T-cell (primary cell): ENCODE measurements at regions of chr17 and their contacts with region 1.

Region 1: DNA sequence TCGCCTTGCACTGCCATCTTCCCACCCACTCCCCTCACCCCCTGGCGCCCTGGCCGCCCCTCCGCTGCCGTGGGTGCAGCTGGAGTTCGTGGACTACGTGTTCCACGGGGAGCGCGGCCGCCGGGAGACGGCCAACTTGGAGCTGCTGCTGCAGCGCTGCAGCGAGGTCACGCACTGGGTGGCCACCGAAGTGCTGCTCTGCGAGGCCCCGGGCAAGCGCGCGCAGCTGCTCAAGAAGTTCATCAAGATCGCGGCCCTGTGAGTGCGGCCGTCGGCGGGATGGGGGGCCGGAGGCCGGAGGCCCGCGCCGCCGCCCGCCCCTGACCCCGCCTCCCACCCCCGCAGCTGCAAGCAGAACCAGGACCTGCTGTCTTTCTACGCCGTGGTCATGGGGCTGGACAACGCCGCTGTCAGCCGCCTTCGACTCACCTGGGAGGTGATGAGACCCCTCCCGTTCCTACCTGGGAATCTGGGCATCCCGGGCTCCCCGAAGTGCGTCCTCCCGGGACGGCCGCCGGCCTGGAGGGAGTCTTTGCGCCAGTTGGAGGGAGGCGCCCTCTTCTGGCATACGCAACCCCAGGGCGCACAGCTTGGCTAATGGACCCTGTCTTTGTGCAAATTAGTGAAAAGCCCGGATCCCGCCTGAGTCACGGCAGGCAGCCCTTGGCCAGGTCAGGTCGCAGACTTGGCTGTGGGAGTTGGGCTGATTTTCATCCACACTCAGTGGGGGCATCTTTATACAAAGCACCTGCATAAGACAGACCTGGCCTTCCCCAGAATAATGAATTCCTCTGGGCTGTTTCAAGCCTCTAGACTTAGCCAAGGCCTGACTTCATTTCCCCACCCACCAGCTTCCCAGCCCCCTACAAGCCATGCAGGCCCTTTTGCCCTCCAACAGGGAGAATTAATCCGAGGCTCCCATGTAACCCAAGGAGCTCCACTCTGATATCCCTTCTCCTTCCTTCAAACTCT is 14.3 kb downstream of the RAPGEFL1 start:
- DNase-seq: peak in 34 of 35 experiments; percentile 22 to 77 (median 48)
- ATAC-seq: peak; percentile 85 to 91 (median 88)
- H3K4me3 ChIP-seq: peak overlapping the region; percentile 51 to 64
- H3K4me3 Mint-ChIP-seq: peak overlapping the region; percentile 86 to 95 (median 92)
- H3K27ac ChIP-seq: no peak overlapping the region
- H3K27ac Mint-ChIP-seq: peak overlapping the region in 1 of 2 donors; percentile 49
- H3K4me1 ChIP-seq: peaks cover 0 to 15% of the 10 kb centered on the region in 2 experiments
- H3K4me1 Mint-ChIP-seq: peaks cover 4 to 18% (median 9%) of the 10 kb centered on the region in 3 donors
- H3K27me3 ChIP-seq: peaks cover 0 to 15% of the 10 kb centered on the region in 2 experiments
- H3K27me3 Mint-ChIP-seq: no peaks in the 10 kb centered on the region

Region 2: GRCh38 chr17:39981207-39981741 is 210.2 kb before region 1 on chr17:
- CTCF ChIA-PET with region 1: no interaction called
- POLR2A ChIA-PET with region 1: no interaction called
- DNase-seq: no peak
- ATAC-seq: no peak
- H3K4me3 ChIP-seq: peak overlapping the region; percentile 85 to 96
- H3K4me3 Mint-ChIP-seq: peak overlapping the region; percentile 88 to 93 (median 91)
- H3K27ac ChIP-seq: peak overlapping the region; percentile 94
- H3K27ac Mint-ChIP-seq: peak overlapping the region; percentile 93 to 97
- H3K4me1 ChIP-seq: peaks cover 13 to 20% of the 10 kb centered on the region in 2 experiments
- H3K4me1 Mint-ChIP-seq: peaks cover 39 to 46% (median 44%) of the 10 kb centered on the region in 3 donors
- H3K27me3 ChIP-seq: peaks cover 0 to 7% of the 10 kb centered on the region in 2 experiments
- H3K27me3 Mint-ChIP-seq: no peaks in the 10 kb centered on the region

Region 3: DNA sequence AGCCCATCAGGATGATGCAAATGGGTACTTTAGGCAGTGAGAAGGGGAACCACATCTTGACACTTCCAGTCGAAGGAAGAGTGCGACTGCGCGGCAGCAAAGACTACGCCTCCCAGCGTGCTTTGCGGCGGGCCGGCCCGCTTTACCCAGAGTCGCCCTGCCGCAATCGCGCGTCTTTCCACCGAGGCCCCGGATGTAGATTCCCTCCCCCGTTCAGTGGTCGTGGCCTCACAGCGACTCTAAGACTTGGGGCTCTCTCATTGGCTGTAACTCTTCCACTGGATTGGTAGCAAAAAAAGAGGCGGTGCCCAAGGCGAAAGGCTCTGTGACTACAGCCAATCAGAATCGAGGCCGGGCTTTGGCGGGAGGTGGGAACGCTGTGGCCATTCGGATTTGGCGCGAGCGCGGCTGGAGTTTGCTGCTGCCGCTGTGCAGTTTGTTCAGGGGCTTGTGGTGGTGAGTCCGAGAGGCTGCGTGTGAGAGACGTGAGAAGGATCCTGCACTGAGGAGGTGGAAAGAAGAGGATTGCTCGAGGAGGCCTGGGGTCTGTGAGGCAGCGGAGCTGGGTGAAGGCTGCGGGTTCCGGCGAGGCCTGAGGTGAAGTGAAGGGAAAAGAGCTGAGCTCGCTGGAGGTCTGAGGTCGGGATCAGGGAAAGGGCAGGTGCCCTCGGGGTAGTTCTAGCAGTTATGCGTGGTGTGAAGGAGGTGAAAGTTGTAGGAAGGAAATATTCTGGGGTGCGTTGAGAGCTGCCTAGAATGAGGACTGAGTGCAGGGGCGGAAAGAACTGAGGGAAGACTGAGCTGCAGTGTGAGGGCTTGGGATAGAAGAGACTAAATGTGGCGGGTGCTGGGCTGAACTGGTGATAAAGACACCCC is 96.2 kb after region 1 on chr17 and contains the start of gene CDC6:
- CTCF ChIA-PET with region 1: no interaction called
- POLR2A ChIA-PET with region 1: interaction called in 1 of 2 experiments, 12 read pairs
- DNase-seq: peak; percentile 93 to 100 (median 99)
- ATAC-seq: peak; percentile 94 to 97 (median 96)
- H3K4me3 ChIP-seq: peak within 1 kb of the TSS; percentile 53 to 81
- H3K4me3 Mint-ChIP-seq: peak within 1 kb of the TSS; percentile 94 to 99 (median 97)
- H3K27ac ChIP-seq: peak within 1 kb of the TSS; percentile 6
- H3K27ac Mint-ChIP-seq: peak within 1 kb of the TSS; percentile 81 to 95
- H3K4me1 ChIP-seq: peaks cover 3 to 20% of the 10 kb centered on the region in 2 experiments
- H3K4me1 Mint-ChIP-seq: peaks cover 28 to 38% (median 32%) of the 10 kb centered on the region in 3 donors
- H3K27me3 ChIP-seq: no peaks in the 10 kb centered on the region
- H3K27me3 Mint-ChIP-seq: no peaks in the 10 kb centered on the region
- total RNA-seq, gene CDC6: 1.3 to 3.2 (median 2.1) TPM